Sigmoid colon (tissue), 7 donors: ENCODE measurements at regions of chr11 and their contacts with region 1.

Region 1: DNA sequence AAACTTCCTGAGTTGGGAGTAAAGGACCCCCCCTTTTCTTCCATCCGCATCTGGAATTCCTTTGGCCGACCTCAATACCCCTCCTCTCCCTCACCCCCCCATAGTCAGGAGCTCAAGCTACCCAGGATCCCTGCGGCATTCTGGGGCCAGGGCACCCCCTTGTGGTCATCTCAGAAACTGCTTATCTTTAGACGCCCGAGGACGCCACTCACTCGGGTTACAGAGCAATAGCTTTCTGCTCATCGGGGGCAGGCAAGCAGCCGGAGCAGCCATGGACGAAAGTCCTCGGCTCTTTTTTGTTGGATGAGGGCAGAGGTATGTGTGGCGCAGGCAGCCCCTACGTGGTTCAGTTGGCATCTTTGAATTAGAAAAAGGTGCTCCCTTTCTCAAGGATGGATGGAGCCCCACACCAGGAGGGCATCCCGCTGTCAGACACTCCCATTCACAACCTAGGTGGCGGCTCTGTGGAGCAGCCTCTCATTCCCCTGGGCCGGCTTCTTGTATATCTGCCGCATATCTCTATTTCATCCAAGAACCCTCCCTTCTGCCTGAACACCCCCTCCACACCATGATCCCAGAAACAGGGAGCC is 2.3 kb downstream of the C1QTNF5 start:
- DNase-seq: peak; percentile 88
- H3K4me3 ChIP-seq: peak overlapping the region in 2 of 4 donors; percentile 63 to 73
- H3K27ac ChIP-seq: peak overlapping the region; percentile 80 to 92 (median 84)
- H3K4me1 ChIP-seq: peaks cover 0 to 70% (median 62%) of the 10 kb centered on the region in 4 donors
- H3K27me3 ChIP-seq: peaks cover 0 to 19% (median 12%) of the 10 kb centered on the region in 3 donors
- CTCF ChIP-seq: peak; percentile 74 to 83 (median 78)
- EP300 ChIP-seq: no peak
- POLR2A ChIP-seq: no peak

Region 2: GRCh38 chr11:119323538-119324033 is 14.8 kb before region 1 on chr11:
- intact Hi-C with region 1: loop called (anchors 1 kb)
- DNase-seq: peak; percentile 91
- H3K4me3 ChIP-seq: no peak overlapping the region
- H3K27ac ChIP-seq: peak overlapping the region; percentile 69 to 99 (median 96)
- H3K4me1 ChIP-seq: peaks cover 0 to 51% (median 44%) of the 10 kb centered on the region in 4 donors
- H3K27me3 ChIP-seq: no peaks in the 10 kb centered on the region
- CTCF ChIP-seq: peak; percentile 78 to 86 (median 84)
- EP300 ChIP-seq: peak in 3 of 4 donors; percentile 13 to 85 (median 58)
- POLR2A ChIP-seq: no peak